ENCODE measurements at regions of chr12 and their contacts with region 1.

Region 1: GRCh38 chr12:8609061-8609570 is 3.5 kb downstream of the AICDA start:
- DNase-seq: peak; percentile 18
- H3K4me3 Mint-ChIP-seq: no peak overlapping the region
- H3K27ac Mint-ChIP-seq: no peak overlapping the region
- H3K4me1 Mint-ChIP-seq: peaks cover 14% of the 10 kb centered on the region
- H3K27me3 Mint-ChIP-seq: peaks cover 7% of the 10 kb centered on the region

Region 2: GRCh38 chr12:8590842-8591550 is 18.1 kb before region 1 on chr12:
- CTCF ChIA-PET with region 1: interaction called, 10 read pairs
- POLR2A ChIA-PET with region 1: no interaction called
- intact Hi-C with region 1: no loop called
- DNase-seq: no peak
- H3K4me3 Mint-ChIP-seq: no peak overlapping the region
- H3K27ac Mint-ChIP-seq: no peak overlapping the region
- H3K4me1 Mint-ChIP-seq: peaks cover 8% of the 10 kb centered on the region
- H3K27me3 Mint-ChIP-seq: no peaks in the 10 kb centered on the region